B cell (primary cell): ENCODE measurements at regions of chr17 and their contacts with region 1.

Region 1: GRCh38 chr17:43787728-43788127 is 7.5 kb downstream of the CFAP97D1 start:
- DNase-seq: no peak
- ATAC-seq: no peak
- H3K4me3 ChIP-seq: no peak overlapping the region
- H3K4me3 Mint-ChIP-seq: no peak overlapping the region
- H3K27ac ChIP-seq: no peak overlapping the region
- H3K27ac Mint-ChIP-seq: no peak overlapping the region
- H3K4me1 ChIP-seq: no peaks in the 10 kb centered on the region
- H3K4me1 Mint-ChIP-seq: peaks cover 6% of the 10 kb centered on the region
- H3K27me3 ChIP-seq: peaks cover 0 to 16% (median 6%) of the 10 kb centered on the region in 4 experiments
- H3K27me3 Mint-ChIP-seq: peaks cover 38% of the 10 kb centered on the region
- CTCF ChIP-seq: no peak

Region 2: DNA sequence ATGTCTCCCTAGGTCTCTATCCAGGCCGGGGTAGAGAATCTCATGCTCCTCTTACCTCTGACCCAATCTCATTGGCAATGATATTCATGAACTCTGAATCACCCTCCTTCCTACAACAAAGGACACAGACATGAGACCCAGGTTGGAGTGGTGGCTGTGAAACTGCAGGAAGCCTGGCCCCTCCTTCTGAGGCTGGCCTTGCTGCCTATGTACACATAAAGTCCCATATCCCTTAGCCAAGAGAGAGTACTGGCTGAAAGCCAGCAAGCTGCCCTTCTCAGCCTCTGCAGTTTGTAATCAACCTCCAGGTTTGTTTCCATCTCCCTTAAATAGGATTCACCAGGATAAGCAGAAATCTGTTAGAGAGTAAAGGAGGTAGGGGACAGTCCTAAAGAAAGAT is 834.1 kb before region 1 on chr17:
- CTCF ChIA-PET with region 1: no interaction called
- POLR2A ChIA-PET with region 1: interaction called, 10 read pairs
- intact Hi-C with region 1: no loop called
- DNase-seq: no peak
- ATAC-seq: no peak
- H3K4me3 ChIP-seq: no peak overlapping the region
- H3K4me3 Mint-ChIP-seq: no peak overlapping the region
- H3K27ac ChIP-seq: no peak overlapping the region
- H3K27ac Mint-ChIP-seq: peak overlapping the region; percentile 20
- H3K4me1 ChIP-seq: no peaks in the 10 kb centered on the region
- H3K4me1 Mint-ChIP-seq: no peaks in the 10 kb centered on the region
- H3K27me3 ChIP-seq: no peaks in the 10 kb centered on the region
- H3K27me3 Mint-ChIP-seq: no peaks in the 10 kb centered on the region
- CTCF ChIP-seq: no peak

Region 3: DNA sequence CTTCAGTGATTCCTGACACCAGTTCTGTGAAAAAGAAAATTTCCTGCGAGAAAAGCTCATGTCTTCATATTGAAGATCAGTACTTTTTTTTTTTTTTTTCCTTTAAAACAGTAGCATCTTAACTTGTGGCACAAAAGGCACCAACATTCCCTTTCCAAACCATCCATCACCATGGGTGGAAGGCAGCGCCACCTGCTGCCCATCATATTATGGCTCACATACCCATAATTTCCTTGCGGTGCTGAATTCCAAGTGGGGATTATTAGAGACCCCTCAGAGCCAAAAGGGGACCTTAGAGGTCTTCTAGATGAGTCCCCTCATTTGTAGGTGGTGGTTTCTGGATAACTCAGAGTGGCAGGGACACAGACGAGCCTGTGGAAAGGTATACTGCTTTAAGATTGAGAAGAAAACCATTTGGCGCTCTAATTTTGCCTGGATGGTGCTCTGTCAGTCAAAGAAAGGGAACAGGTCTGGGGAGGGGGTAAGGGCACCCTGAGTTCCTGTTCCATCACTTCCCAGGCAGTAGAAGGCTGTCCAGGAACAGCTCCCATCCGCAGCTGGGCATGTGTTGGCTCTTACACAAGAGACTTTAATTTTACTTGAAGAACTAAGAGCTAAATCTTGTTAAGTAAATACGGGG is 21.2 kb before region 1 on chr17:
- CTCF ChIA-PET with region 1: interaction called, 13 read pairs
- POLR2A ChIA-PET with region 1: no interaction called
- intact Hi-C with region 1: no loop called
- DNase-seq: peak; percentile 63
- ATAC-seq: no peak
- H3K4me3 ChIP-seq: no peak overlapping the region
- H3K4me3 Mint-ChIP-seq: no peak overlapping the region
- H3K27ac ChIP-seq: no peak overlapping the region
- H3K27ac Mint-ChIP-seq: no peak overlapping the region
- H3K4me1 ChIP-seq: peaks cover 9% of the 10 kb centered on the region in 2 donors
- H3K4me1 Mint-ChIP-seq: peaks cover 16% of the 10 kb centered on the region
- H3K27me3 ChIP-seq: no peaks in the 10 kb centered on the region
- H3K27me3 Mint-ChIP-seq: no peaks in the 10 kb centered on the region
- CTCF ChIP-seq: peak; percentile 88

Region 4: GRCh38 chr17:43846221-43846712 is 58.5 kb after region 1 on chr17:
- CTCF ChIA-PET with region 1: no interaction called
- POLR2A ChIA-PET with region 1: no interaction called
- intact Hi-C with region 1: no loop called
- DNase-seq: peak; percentile 71
- ATAC-seq: peak; percentile 98
- H3K4me3 ChIP-seq: no peak overlapping the region
- H3K4me3 Mint-ChIP-seq: no peak overlapping the region
- H3K27ac ChIP-seq: no peak overlapping the region
- H3K27ac Mint-ChIP-seq: no peak overlapping the region
- H3K4me1 ChIP-seq: no peaks in the 10 kb centered on the region
- H3K4me1 Mint-ChIP-seq: no peaks in the 10 kb centered on the region
- H3K27me3 ChIP-seq: peaks cover 0 to 8% (median 0%) of the 10 kb centered on the region in 4 experiments
- H3K27me3 Mint-ChIP-seq: peaks cover 28% of the 10 kb centered on the region
- CTCF ChIP-seq: peak; percentile 95